ENCODE measurements at regions of chr3 and their contacts with region 1.

Region 1: GRCh38 chr3:16550676-16551341 is 37.3 kb upstream of the RFTN1 start:
- DNase-seq: peak in 2 of 3 donors; percentile 35 to 73
- ATAC-seq: peak; percentile 98 to 99 (median 98)
- H3K4me3 ChIP-seq: peak overlapping the region in 2 of 3 donors; percentile 32 to 46
- H3K27ac ChIP-seq: no peak overlapping the region
- H3K4me1 ChIP-seq: peaks cover 0 to 4% (median 0%) of the 10 kb centered on the region in 4 donors
- H3K27me3 ChIP-seq: no peaks in the 10 kb centered on the region
- CTCF ChIP-seq: peak; percentile 82 to 95 (median 85)
- POLR2A ChIP-seq: no peak

Region 2: GRCh38 chr3:16286161-16286560 is 264.6 kb before region 1 on chr3:
- intact Hi-C with region 1: loop called (anchors 10 kb)
- DNase-seq: no peak
- ATAC-seq: peak; percentile 27 to 38 (median 32)
- H3K4me3 ChIP-seq: no peak overlapping the region
- H3K27ac ChIP-seq: peak overlapping the region in 1 of 3 donors; percentile 10
- H3K4me1 ChIP-seq: peaks cover 0 to 7% (median 2%) of the 10 kb centered on the region in 4 donors
- H3K27me3 ChIP-seq: no peaks in the 10 kb centered on the region
- CTCF ChIP-seq: no peak
- POLR2A ChIP-seq: no peak

Region 3: GRCh38 chr3:16658004-16658920 is 107.5 kb after region 1 on chr3:
- intact Hi-C with region 1: no loop called
- DNase-seq: no peak
- ATAC-seq: no peak
- H3K4me3 ChIP-seq: no peak overlapping the region
- H3K27ac ChIP-seq: no peak overlapping the region
- H3K4me1 ChIP-seq: no peaks in the 10 kb centered on the region
- H3K27me3 ChIP-seq: no peaks in the 10 kb centered on the region
- CTCF ChIP-seq: no peak
- POLR2A ChIP-seq: no peak

Region 4: GRCh38 chr3:16784936-16785335 is 234.1 kb after region 1 on chr3:
- intact Hi-C with region 1: no loop called
- DNase-seq: no peak
- ATAC-seq: no peak
- H3K4me3 ChIP-seq: no peak overlapping the region
- H3K27ac ChIP-seq: no peak overlapping the region
- H3K4me1 ChIP-seq: no peaks in the 10 kb centered on the region
- H3K27me3 ChIP-seq: no peaks in the 10 kb centered on the region
- CTCF ChIP-seq: no peak
- POLR2A ChIP-seq: no peak

Measured in right lobe of liver (tissue), 6 donors.